ENCODE measurements at regions of chr1 and their contacts with region 1.

Region 1: GRCh38 chr1:234326497-234327366 is 46.5 kb upstream of the COA6 start:
- DNase-seq: peak; percentile 56
- H3K4me3 ChIP-seq: peak overlapping the region; percentile 34 to 65 (median 40)
- H3K27ac ChIP-seq: no peak overlapping the region
- H3K4me1 ChIP-seq: no peaks in the 10 kb centered on the region
- H3K27me3 ChIP-seq: peaks cover 12 to 13% of the 10 kb centered on the region in 2 experiments
- CTCF ChIP-seq: peak; percentile 81 to 85
- POLR2A ChIP-seq: no peak

Region 2: GRCh38 chr1:234114648-234115307 is 212.0 kb before region 1 on chr1:
- CTCF ChIA-PET with region 1: interaction called, 10 read pairs
- POLR2A ChIA-PET with region 1: no interaction called
- dilution Hi-C with region 1: no loop called
- intact Hi-C with region 1: loop called (anchors 1 kb)
- DNase-seq: peak; percentile 49
- H3K4me3 ChIP-seq: no peak overlapping the region
- H3K27ac ChIP-seq: no peak overlapping the region
- H3K4me1 ChIP-seq: peaks cover 3% of the 10 kb centered on the region
- H3K27me3 ChIP-seq: peaks cover 0 to 2% of the 10 kb centered on the region in 2 experiments
- CTCF ChIP-seq: peak; percentile 48 to 56
- POLR2A ChIP-seq: no peak

Region 3: DNA sequence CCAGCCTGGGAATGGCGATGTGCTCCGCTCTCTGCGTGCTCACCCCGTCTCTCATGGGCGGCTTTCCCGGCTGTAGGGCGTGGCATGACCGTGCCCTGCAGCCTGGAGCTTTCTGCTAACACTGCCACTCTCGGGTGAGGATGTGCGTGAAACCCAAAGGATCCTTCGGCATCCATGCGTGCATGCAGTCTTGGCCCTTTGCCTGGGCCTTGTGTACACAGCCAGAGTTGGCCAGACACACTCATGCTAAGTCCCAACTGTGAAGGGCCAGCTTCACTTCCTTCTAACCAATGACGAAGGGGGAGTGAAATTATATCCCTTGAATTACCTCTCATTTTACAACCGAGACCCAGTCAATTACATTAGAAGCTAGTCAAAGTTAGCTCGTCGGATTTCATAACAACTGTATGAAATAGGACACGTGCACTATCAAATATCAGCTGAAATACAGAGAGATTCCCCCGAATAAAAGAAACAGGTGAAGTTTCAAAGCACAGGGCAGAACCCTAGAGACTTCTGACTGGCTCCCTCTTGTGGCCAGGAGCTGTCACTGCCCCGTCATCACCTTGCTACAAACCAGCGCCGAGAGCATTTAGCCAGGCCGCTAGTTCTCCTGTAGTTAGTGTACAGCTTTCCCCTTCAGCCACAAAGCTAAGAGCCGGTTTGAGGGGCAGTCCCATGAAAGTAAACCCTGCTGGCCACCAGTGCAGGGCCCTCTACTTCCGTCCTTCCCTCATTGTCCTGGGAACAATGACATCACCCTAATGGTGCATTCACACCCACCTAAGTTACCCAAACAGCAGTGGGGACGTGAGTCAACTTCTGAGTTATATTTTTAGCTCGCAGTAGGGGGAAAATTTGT is 16.9 kb before region 1 on chr1:
- CTCF ChIA-PET with region 1: interaction called, 42 read pairs
- POLR2A ChIA-PET with region 1: no interaction called
- dilution Hi-C with region 1: no loop called
- intact Hi-C with region 1: no loop called
- DNase-seq: peak; percentile 43
- H3K4me3 ChIP-seq: no peak overlapping the region
- H3K27ac ChIP-seq: no peak overlapping the region
- H3K4me1 ChIP-seq: peaks cover 2% of the 10 kb centered on the region
- H3K27me3 ChIP-seq: peaks cover 0 to 3% of the 10 kb centered on the region in 2 experiments
- CTCF ChIP-seq: peak; percentile 91 to 92
- POLR2A ChIP-seq: no peak

Region 4: DNA sequence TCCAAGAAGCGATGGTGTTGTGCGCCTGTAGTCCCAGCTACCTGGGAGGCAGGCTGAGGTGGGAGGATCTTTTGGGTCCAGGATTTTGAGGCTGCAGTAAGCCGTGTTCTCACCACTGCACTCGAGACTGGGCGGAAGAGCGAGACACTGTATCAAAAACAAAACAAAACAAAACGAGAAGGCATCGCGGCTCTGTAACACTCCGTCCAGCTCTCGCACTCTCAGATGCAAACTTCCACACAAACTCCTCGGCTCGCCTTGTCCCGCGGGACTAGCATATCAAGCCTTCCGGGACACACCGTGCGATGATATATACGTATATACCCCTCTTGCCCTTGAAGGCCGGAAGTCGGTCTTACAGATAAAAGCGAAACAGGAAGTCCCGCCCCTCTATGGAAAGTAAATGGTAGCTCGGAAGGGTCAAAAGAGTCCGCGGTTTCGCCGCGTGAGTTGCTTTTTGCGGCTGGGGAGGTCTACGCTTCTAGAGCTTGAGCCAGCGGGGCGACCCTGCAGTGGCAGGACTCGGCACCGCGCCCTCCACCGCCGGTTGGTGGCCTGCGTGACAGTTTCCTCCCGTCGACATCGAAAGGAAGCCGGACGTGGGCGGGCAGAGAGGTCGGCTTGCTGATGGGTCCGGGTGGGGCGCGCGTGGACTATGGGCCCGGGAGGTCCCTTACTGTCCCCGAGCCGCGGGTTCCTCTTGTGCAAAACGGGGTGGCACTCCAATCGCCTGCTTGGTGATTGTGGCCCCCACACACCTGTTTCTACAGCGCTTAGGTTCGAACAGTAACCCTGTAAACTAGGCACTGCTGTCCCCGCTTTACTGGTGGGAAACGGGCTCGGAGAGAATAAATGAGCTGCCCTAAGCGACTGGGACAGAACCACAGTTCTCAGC is 46.6 kb after region 1 on chr1 and contains the start of gene COA6:
- CTCF ChIA-PET with region 1: interaction called, 4 read pairs
- POLR2A ChIA-PET with region 1: no interaction called
- dilution Hi-C with region 1: no loop called
- intact Hi-C with region 1: loop called (anchors 2 kb)
- DNase-seq: peak; percentile 97
- H3K4me3 ChIP-seq: peak within 1 kb of the TSS; percentile 83 to 86 (median 85)
- H3K27ac ChIP-seq: peak within 1 kb of the TSS; percentile 86
- H3K4me1 ChIP-seq: peaks cover 16% of the 10 kb centered on the region
- H3K27me3 ChIP-seq: no peaks in the 10 kb centered on the region
- CTCF ChIP-seq: no peak
- POLR2A ChIP-seq: peak; percentile 89
- total RNA-seq, gene COA6: 34.2 and 42.7 TPM in 2 replicates

Region 5: GRCh38 chr1:234466945-234467344 is 140.2 kb after region 1 on chr1:
- CTCF ChIA-PET with region 1: no interaction called
- POLR2A ChIA-PET with region 1: no interaction called
- dilution Hi-C with region 1: no loop called
- intact Hi-C with region 1: no loop called
- DNase-seq: no peak
- H3K4me3 ChIP-seq: no peak overlapping the region
- H3K27ac ChIP-seq: no peak overlapping the region
- H3K4me1 ChIP-seq: no peaks in the 10 kb centered on the region
- H3K27me3 ChIP-seq: no peaks in the 10 kb centered on the region
- CTCF ChIP-seq: no peak
- POLR2A ChIP-seq: no peak

Region 6: DNA sequence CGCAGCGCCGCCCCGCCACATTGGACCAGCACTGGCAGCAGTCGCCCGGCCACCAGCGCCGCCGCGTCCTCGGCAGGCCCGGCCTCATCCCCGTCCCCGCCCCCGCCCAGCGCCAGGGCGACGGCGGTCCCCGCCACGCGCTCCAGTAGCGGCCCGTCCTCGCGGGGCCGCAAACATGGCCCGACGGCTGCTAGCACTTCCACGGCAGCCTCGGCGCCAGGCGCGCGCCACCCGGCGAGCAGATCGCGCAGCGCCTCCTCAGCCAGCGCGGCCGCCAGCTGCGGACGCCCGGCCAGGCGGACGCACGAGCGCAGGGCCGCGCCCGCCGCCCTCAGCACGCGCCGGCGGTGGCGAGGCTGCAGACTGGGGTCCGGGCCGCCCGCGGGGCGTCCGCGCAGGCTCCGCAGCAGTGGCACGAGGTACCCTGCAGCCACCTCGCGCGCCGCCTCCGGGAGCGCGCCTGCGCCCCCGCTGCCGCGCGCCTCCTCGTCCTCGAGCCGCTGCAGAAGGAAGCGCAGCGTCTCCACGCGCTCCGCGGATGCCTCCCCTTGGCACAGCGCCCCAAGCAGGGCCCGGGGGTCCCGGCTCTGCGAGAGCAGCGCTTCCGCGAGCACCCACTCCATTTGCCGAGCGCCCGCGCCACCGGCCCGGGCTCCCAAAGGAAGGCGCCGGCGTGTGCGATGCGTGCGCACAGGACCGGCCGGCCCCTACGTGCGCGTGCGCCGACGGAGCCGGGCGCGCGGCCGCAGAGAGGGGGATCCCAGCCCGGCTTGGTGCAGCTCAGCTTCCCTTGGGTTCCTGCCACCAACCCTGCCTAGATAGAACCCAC is 152.0 kb after region 1 on chr1 and contains the start of gene TARBP1:
- CTCF ChIA-PET with region 1: interaction called, 3 read pairs
- POLR2A ChIA-PET with region 1: no interaction called
- dilution Hi-C with region 1: no loop called
- intact Hi-C with region 1: loop called (anchors 1 kb)
- DNase-seq: peak; percentile 75
- H3K4me3 ChIP-seq: peak within 1 kb of the TSS; percentile 46 to 78 (median 48)
- H3K27ac ChIP-seq: peak within 1 kb of the TSS; percentile 35
- H3K4me1 ChIP-seq: peaks cover 6% of the 10 kb centered on the region
- H3K27me3 ChIP-seq: peaks cover 18 to 21% of the 10 kb centered on the region in 2 experiments
- CTCF ChIP-seq: peak in 1 of 2 donors; percentile 27
- POLR2A ChIP-seq: peak; percentile 71
- total RNA-seq, gene TARBP1: 21.0 and 23.4 TPM in 2 replicates

Region 7: DNA sequence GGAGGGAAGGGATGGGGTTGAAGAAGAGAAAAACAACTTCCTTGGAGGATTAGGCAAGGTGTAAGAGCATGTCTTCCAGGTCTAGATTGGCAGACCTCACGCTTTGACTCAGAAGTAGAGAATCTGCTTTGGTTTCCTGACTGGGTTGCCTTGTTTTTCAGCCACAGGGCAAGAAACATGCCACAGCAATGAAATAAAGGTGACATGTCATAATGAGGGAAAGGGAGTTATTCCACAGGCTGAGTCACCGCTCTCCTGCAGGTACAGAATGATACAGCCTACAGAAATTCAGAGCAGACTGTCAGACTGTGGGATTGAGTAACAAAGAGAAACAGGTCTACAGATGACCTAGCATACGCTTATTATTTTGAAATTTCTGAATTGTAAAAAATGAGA is 237.9 kb after region 1 on chr1:
- CTCF ChIA-PET with region 1: no interaction called
- POLR2A ChIA-PET with region 1: no interaction called
- dilution Hi-C with region 1: no loop called
- intact Hi-C with region 1: no loop called
- DNase-seq: peak; percentile 35
- H3K4me3 ChIP-seq: no peak overlapping the region
- H3K27ac ChIP-seq: no peak overlapping the region
- H3K4me1 ChIP-seq: peaks cover 4% of the 10 kb centered on the region
- H3K27me3 ChIP-seq: peaks cover 0 to 3% of the 10 kb centered on the region in 2 experiments
- CTCF ChIP-seq: no peak
- POLR2A ChIP-seq: no peak

Region 8: DNA sequence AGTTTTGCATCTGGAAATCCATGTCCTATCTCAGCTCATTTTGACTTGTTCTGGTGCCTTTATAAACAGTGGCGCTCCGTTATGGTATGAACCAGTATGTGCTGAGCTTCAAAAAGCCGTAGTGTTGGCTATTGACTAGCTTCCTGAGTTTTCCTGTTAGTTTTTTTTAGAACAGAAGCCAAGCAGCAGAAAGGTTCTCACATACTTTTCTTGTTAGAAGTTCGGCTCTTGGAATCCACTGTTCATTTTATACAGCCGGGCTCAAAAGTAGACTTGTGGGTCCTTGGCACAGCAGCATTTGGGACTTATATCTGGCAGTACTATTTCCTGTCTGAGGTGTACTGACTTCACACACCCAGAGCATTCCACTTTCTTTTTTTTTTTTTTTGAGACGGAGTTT is 1104.3 kb after region 1 on chr1:
- CTCF ChIA-PET with region 1: no interaction called
- POLR2A ChIA-PET with region 1: no interaction called
- dilution Hi-C with region 1: no loop called
- intact Hi-C with region 1: no loop called
- DNase-seq: peak; percentile 29
- H3K4me3 ChIP-seq: no peak overlapping the region
- H3K27ac ChIP-seq: no peak overlapping the region
- H3K4me1 ChIP-seq: no peaks in the 10 kb centered on the region
- H3K27me3 ChIP-seq: no peaks in the 10 kb centered on the region
- CTCF ChIP-seq: no peak
- POLR2A ChIP-seq: no peak